ENCODE measurements at regions of chr1 and their contacts with region 1.

Region 1: GRCh38 chr1:205121660-205122488 is at the start of gene RBBP5:
- DNase-seq: peak; percentile 93 to 99 (median 94)
- ATAC-seq: peak; percentile 98
- H3K4me3 ChIP-seq: peak within 1 kb of the TSS; percentile 73
- H3K27ac ChIP-seq: peak within 1 kb of the TSS; percentile 98
- H3K4me1 ChIP-seq: peaks cover 18 to 19% of the 10 kb centered on the region in 2 experiments; a peak in 4 of 5 replicates
- H3K27me3 ChIP-seq: no peaks in the 10 kb centered on the region
- CTCF ChIP-seq: peak; percentile 98 to 99 (median 99)
- EP300 ChIP-seq: peak; percentile 75
- POLR2A ChIP-seq: peak; percentile 99
- RAD21 ChIP-seq: peak; percentile 65 to 82
- polyA plus RNA-seq, gene RBBP5: 20.0 to 28.4 TPM

Region 2: GRCh38 chr1:205111354-205111753 is 10.5 kb before region 1 on chr1:
- CTCF ChIA-PET with region 1: no interaction called
- POLR2A ChIA-PET with region 1: interaction called, 55 read pairs
- in situ Hi-C with region 1: no loop called
- intact Hi-C with region 1: no loop called
- DNase-seq: no peak
- ATAC-seq: no peak
- H3K4me3 ChIP-seq: no peak overlapping the region
- H3K27ac ChIP-seq: no peak overlapping the region
- H3K4me1 ChIP-seq: no peaks in the 10 kb centered on the region
- H3K27me3 ChIP-seq: no peaks in the 10 kb centered on the region
- CTCF ChIP-seq: no peak
- EP300 ChIP-seq: no peak
- POLR2A ChIP-seq: no peak
- RAD21 ChIP-seq: no peak

Region 3: DNA sequence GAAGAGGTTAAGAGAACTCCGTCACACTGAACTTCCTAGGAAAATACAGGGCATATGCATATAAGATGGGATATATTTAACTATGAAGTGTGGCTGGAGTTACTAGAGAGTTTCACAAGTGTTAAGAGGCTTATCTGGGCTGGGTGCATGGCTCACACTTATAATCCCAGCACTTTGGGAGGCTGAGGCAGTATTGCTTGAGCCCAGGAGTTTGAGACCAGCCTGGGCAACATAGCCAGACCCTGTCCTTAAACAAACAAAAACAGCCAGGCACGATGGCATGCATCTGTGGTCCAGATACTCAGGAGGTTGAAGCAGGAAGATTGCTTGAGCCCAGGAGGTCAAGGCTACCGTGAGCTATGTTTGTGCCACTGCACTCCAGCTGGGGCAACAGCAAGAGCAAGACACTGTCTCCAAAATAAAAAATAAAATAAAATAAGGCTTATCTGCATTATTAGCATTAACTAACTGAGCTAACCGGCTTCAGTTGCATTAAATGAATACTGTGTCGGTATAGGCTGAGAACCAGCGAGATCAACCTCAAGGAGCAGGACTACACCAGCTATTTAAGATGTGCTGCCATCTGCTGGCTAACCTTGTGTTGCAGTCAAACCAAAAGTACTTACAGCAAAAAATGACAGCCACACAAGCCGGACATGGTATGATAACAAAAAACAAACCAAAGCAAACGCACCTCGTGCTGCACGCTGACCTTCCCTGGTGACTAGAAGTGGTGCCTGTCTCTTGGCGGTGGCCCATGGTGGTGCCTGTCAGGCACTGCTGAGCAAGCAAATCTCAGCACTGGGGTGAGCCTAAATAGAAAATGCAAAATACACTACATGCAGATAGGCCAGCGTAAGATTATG is 19.6 kb after region 1 on chr1:
- CTCF ChIA-PET with region 1: no interaction called
- POLR2A ChIA-PET with region 1: interaction called, 18 read pairs
- in situ Hi-C with region 1: no loop called
- intact Hi-C with region 1: no loop called
- DNase-seq: peak; percentile 77 to 91 (median 79)
- ATAC-seq: peak; percentile 94
- H3K4me3 ChIP-seq: no peak overlapping the region
- H3K27ac ChIP-seq: no peak overlapping the region
- H3K4me1 ChIP-seq: peaks cover 3 to 7% of the 10 kb centered on the region in 2 experiments; a peak in 3 of 5 replicates
- H3K27me3 ChIP-seq: no peaks in the 10 kb centered on the region
- CTCF ChIP-seq: peak; percentile 87 to 92 (median 92)
- EP300 ChIP-seq: no peak
- POLR2A ChIP-seq: no peak
- RAD21 ChIP-seq: peak; percentile 65 to 83

Region 4: GRCh38 chr1:205162301-205162700 is 40.4 kb after region 1 on chr1:
- CTCF ChIA-PET with region 1: no interaction called
- POLR2A ChIA-PET with region 1: interaction called, 28 read pairs
- in situ Hi-C with region 1: no loop called
- intact Hi-C with region 1: loop called (anchors 1 kb)
- DNase-seq: no peak
- ATAC-seq: no peak
- H3K4me3 ChIP-seq: no peak overlapping the region
- H3K27ac ChIP-seq: no peak overlapping the region
- H3K4me1 ChIP-seq: peaks cover 4 to 16% of the 10 kb centered on the region in 2 experiments
- H3K27me3 ChIP-seq: no peaks in the 10 kb centered on the region
- CTCF ChIP-seq: no peak
- EP300 ChIP-seq: no peak
- POLR2A ChIP-seq: no peak
- RAD21 ChIP-seq: no peak

Region 5: DNA sequence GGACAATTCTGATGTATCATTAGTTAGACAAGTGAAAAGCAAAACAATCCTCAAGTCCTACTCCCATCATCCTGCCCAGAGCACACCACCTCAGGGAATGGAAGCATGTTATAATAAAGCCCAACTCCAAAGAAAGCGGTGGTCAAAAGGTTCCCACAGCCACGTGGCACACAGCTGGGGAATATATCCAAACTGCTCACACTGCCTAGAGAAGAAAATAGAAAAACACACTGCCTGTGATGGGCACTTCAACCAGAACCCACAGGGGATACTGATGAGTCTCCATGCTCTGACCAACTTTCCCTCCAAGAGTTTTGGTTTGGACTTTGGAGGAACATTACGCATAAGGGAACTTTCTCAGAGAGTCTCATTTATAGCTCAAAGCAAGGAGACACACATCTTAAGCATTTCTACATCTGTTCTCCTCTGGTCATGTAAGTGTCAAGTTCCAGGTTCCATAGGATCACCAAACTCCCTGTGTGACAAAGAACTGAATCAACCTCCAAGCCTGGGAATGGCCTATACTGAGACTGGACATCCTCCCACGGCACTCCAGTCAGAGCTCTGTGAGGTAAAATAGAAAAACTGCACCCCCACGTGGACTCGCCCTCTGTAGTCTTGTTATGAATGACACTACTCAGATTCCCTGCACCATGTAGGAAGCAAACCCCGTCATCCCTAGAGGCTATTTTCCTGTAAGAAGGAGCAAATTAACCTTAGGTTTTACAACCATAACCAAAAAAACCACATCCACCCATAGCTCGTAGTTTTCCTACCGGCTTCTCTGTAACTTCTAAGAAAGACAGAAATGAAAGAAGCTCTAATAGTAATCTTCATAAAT is 77.4 kb after region 1 on chr1:
- CTCF ChIA-PET with region 1: no interaction called
- POLR2A ChIA-PET with region 1: interaction called, 3 read pairs
- in situ Hi-C with region 1: no loop called
- intact Hi-C with region 1: loop called (anchors 5 kb)
- DNase-seq: peak in 2 of 4 experiments; percentile 46 to 66
- ATAC-seq: peak; percentile 88
- H3K4me3 ChIP-seq: no peak overlapping the region
- H3K27ac ChIP-seq: no peak overlapping the region
- H3K4me1 ChIP-seq: peaks cover 0 to 14% of the 10 kb centered on the region in 2 experiments; a peak in 4 of 5 replicates
- H3K27me3 ChIP-seq: no peaks in the 10 kb centered on the region
- CTCF ChIP-seq: peak; percentile 14 to 55 (median 23); a peak in 3 of 6 replicates
- EP300 ChIP-seq: no peak
- POLR2A ChIP-seq: no peak
- RAD21 ChIP-seq: peak; percentile 57 to 75

Region 6: GRCh38 chr1:205211169-205211838 is 89.4 kb after region 1 on chr1 and contains the start of gene DSTYK:
- CTCF ChIA-PET with region 1: no interaction called
- POLR2A ChIA-PET with region 1: interaction called, 3 read pairs
- in situ Hi-C with region 1: no loop called
- intact Hi-C with region 1: loop called (anchors 2 kb)
- DNase-seq: peak; percentile 95 to 99 (median 96)
- ATAC-seq: peak; percentile 95
- H3K4me3 ChIP-seq: peak within 1 kb of the TSS; percentile 85
- H3K27ac ChIP-seq: peak within 1 kb of the TSS; percentile 66
- H3K4me1 ChIP-seq: peaks cover 16 to 44% of the 10 kb centered on the region in 2 experiments
- H3K27me3 ChIP-seq: no peaks in the 10 kb centered on the region
- CTCF ChIP-seq: no peak
- EP300 ChIP-seq: peak; percentile 84
- POLR2A ChIP-seq: peak; percentile 90
- RAD21 ChIP-seq: no peak; a peak in 1 of 4 replicates
- polyA plus RNA-seq, gene DSTYK: 4.6 to 5.0 TPM

Region 7: DNA sequence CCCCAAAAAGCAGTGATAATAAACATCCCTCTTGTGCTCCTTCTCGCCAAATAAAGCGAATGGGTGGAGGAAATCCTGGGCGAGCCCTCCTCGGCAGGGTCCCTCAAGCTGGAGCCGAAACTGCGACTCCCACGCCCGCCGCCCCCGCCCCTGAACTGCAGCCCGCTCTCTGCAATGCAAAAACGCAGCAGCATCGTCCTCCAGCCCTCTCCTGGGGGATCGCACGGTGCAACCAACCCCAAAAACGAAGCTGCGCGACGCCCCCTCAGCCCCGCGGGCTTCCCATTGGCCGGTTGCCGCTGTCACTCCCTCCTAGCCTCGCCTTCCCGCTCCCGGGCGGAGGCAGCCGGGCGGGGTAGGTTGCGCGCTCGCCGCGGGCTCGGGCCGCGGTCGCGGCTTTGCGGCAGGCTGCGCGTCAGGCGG is 105.7 kb after region 1 on chr1 and contains the start of gene TMCC2:
- CTCF ChIA-PET with region 1: no interaction called
- POLR2A ChIA-PET with region 1: interaction called, 7 read pairs
- in situ Hi-C with region 1: no loop called
- intact Hi-C with region 1: loop called (anchors 1 kb)
- DNase-seq: peak; percentile 95 to 100 (median 99)
- ATAC-seq: peak; percentile 96
- H3K4me3 ChIP-seq: peak within 1 kb of the TSS; percentile 47
- H3K27ac ChIP-seq: no peak within 1 kb of the TSS
- H3K4me1 ChIP-seq: peaks cover 27 to 29% of the 10 kb centered on the region in 2 experiments
- H3K27me3 ChIP-seq: peaks cover 3 to 13% of the 10 kb centered on the region in 2 experiments; a peak in 4 of 5 replicates
- CTCF ChIP-seq: no peak
- EP300 ChIP-seq: no peak
- POLR2A ChIP-seq: no peak
- RAD21 ChIP-seq: no peak; a peak in 1 of 4 replicates
- polyA plus RNA-seq, gene TMCC2: 0.06 to 0.10 TPM